ENCODE measurements at regions of chr4 and their contacts with region 1.

Region 1: GRCh38 chr4:107757864-107758476 is 37.9 kb upstream of the PAPSS1 start:
- DNase-seq: peak; percentile 40 to 67 (median 60)
- H3K4me3 ChIP-seq: no peak overlapping the region
- H3K27ac ChIP-seq: no peak overlapping the region
- H3K4me1 ChIP-seq: peaks cover 0 to 14% (median 8%) of the 10 kb centered on the region in 4 experiments
- H3K27me3 ChIP-seq: no peaks in the 10 kb centered on the region

Region 2: DNA sequence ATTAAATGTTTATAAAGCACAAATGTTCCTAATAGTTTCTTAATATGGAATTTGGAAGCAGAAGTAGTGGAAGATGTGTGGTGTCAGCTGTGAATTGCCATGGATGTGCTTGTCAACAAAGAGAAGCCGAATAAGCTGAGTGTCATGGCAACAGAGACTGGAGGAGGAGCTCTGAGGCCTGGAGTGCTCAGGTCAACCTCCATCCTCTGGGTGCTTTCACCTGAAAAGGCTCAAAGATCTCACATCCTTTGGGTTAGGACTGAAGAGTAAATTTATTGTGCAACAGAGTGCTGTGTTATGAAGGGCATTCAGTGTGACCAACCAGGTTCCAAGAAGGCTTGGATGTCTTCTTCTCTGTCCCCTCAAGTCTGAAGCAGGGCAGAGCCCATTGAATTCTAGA is 85.4 kb after region 1 on chr4:
- CTCF ChIA-PET with region 1: no interaction called
- POLR2A ChIA-PET with region 1: no interaction called
- DNase-seq: peak in 1 of 3 donors; percentile 29
- H3K4me3 ChIP-seq: no peak overlapping the region
- H3K27ac ChIP-seq: no peak overlapping the region
- H3K4me1 ChIP-seq: peaks cover 2 to 10% (median 6%) of the 10 kb centered on the region in 4 experiments
- H3K27me3 ChIP-seq: no peaks in the 10 kb centered on the region

Region 3: GRCh38 chr4:107902715-107903114 is 144.7 kb after region 1 on chr4:
- CTCF ChIA-PET with region 1: interaction called, 20 read pairs
- POLR2A ChIA-PET with region 1: no interaction called
- DNase-seq: no peak
- H3K4me3 ChIP-seq: no peak overlapping the region
- H3K27ac ChIP-seq: no peak overlapping the region
- H3K4me1 ChIP-seq: no peaks in the 10 kb centered on the region
- H3K27me3 ChIP-seq: no peaks in the 10 kb centered on the region

Region 4: DNA sequence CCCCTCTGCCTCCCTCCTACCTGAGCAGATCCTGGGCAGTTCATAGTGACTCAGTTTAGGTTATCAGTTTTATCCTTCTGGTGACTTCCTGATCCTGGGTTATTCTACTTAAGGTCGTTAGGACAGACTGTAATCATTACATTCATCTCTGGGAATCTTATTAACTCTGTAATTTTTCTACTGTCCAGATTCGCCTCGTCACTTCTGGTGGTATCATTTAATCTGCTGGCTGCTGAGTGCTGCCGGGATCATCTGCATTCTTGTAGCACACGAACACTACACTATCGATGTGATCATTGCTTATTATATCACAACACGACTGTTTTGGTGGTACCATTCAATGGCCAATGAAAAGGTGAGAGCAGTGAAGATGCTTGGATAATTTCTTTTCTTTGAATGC is 150.4 kb after region 1 on chr4:
- CTCF ChIA-PET with region 1: interaction called, 24 read pairs
- POLR2A ChIA-PET with region 1: no interaction called
- DNase-seq: no peak
- H3K4me3 ChIP-seq: no peak overlapping the region
- H3K27ac ChIP-seq: no peak overlapping the region
- H3K4me1 ChIP-seq: peaks cover 0 to 3% (median 0%) of the 10 kb centered on the region in 4 experiments
- H3K27me3 ChIP-seq: no peaks in the 10 kb centered on the region

Region 5: GRCh38 chr4:107913281-107913899 is 155.4 kb after region 1 on chr4:
- CTCF ChIA-PET with region 1: interaction called, 24 read pairs
- POLR2A ChIA-PET with region 1: no interaction called
- DNase-seq: peak; percentile 74 to 87 (median 82)
- H3K4me3 ChIP-seq: no peak overlapping the region
- H3K27ac ChIP-seq: no peak overlapping the region
- H3K4me1 ChIP-seq: peaks cover 0 to 3% (median 0%) of the 10 kb centered on the region in 4 experiments
- H3K27me3 ChIP-seq: no peaks in the 10 kb centered on the region